Right cardiac atrium (tissue), 5 donors: ENCODE measurements at regions of chr6 and their contacts with region 1.

Region 1: DNA sequence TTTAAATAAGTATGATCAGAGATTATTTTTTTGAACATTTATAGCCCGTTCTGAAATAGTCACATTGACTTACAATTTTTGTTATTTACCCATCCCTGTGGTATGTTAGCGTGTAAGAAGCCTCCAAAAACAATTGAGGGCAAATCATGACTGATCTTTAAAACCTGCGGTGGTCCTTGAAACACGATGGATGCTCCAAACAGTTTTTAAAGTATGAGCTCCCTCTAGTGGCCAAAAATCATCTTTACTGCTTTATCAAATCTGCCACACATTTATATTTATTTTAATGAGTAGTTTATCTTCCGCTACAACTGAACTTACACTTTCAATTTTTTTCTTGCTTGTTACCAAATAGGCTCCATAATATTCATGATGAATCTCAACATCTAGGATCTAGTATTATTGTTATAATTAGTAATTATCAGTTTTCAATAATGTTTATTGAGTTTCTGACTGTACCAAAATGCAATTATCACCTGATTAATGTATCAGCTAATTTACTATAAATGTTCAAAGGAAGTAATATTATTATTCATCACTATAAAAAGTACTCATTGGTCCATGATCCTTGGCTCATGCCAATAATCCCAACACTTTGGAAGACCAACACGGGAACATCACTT is 52.2 kb downstream of the MARCKS start:
- DNase-seq: no peak
- ATAC-seq: no peak
- H3K4me3 ChIP-seq: no peak overlapping the region
- H3K27ac ChIP-seq: no peak overlapping the region
- H3K4me1 ChIP-seq: no peaks in the 10 kb centered on the region
- H3K27me3 ChIP-seq: no peaks in the 10 kb centered on the region

Region 2: DNA sequence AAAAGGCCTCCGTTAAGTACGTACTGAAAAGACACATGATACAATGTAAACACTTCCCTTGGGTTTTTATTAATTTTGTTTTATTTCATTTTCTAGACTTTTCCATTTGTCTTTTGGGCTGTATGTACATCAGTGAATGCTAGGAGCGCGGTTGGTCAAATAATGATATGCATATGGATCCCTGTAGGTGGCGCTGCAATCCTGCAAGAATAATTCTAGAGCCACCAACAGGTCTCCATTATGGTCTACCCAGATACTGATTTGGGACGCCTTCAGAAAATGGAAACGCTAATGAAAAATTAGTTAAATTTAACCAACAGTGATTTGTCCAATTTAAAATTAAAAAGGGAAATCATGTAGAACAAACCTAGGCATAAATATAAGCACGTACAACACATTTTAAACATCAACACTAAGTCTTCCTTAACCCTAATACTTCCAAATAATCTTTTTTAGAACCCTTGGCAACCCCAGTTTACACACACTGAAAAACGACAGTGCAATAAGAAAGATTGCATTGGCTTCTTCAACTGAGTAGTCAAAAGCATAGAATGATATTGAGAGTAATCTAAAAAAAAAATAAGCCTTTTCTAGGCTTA is 1128.7 kb before region 1 on chr6:
- intact Hi-C with region 1: loop called in 1 of 4 experiments (anchors 5 kb)
- DNase-seq: peak; percentile 62 to 70 (median 64)
- ATAC-seq: peak; percentile 89 to 94
- H3K4me3 ChIP-seq: no peak overlapping the region
- H3K27ac ChIP-seq: no peak overlapping the region
- H3K4me1 ChIP-seq: no peaks in the 10 kb centered on the region
- H3K27me3 ChIP-seq: no peaks in the 10 kb centered on the region